Activated B cell treated with CpG ODN at 0.5 μM for 24 hours (primary cell): ENCODE measurements at regions of chr10 and their contacts with region 1.

Region 1: GRCh38 chr10:100046021-100046486 is 35.6 kb downstream of the CPN1 start:
- DNase-seq: peak; percentile 75
- ATAC-seq: peak; percentile 73
- H3K4me3 Mint-ChIP-seq: no peak overlapping the region
- H3K27ac Mint-ChIP-seq: no peak overlapping the region
- H3K4me1 Mint-ChIP-seq: peaks cover 6% of the 10 kb centered on the region
- H3K27me3 Mint-ChIP-seq: no peaks in the 10 kb centered on the region
- CTCF ChIP-seq: peak; percentile 81

Region 2: DNA sequence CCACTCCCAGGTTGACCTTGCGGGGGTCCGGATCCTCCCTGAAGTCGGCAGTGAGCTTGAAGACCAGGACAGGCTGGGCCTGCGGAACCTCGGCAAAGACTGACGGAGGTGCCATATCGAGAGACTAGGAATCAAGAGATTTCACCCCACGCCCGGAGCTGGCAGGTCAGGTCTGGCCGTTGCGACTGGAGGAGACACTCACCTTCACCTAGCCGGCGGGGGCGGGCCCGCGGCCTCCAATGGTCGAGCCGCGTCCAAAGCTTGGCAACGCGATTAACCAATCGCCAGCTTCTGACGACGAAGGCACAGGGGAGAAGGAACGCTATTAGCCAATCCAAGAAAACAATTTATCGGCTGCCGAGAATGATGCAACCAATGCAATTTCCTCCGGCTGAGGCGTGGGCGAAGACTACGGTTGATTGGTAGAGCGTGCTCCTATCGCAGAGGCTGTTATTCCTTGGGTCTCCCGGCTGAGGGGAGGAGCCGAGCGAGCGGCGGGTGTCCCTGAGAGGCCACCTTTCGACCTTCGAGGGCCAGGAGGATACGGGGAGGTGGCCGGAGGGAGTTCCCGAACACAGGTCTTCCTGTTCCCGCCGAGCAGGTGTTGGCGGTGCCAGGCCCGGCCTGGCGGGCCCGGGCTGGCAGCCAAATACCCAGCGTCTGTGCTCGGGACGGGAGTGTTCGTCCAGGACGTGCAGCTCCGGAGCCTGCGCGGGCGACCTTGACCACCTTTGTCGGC is 615.4 kb before region 1 on chr10 and contains the start of gene GOT1:
- CTCF ChIA-PET with region 1: no interaction called
- POLR2A ChIA-PET with region 1: no interaction called
- intact Hi-C with region 1: loop called (anchors 10 kb)
- DNase-seq: peak; percentile 85
- ATAC-seq: peak; percentile 91
- H3K4me3 Mint-ChIP-seq: peak within 1 kb of the TSS; percentile 98
- H3K27ac Mint-ChIP-seq: peak within 1 kb of the TSS; percentile 92
- H3K4me1 Mint-ChIP-seq: peaks cover 29% of the 10 kb centered on the region
- H3K27me3 Mint-ChIP-seq: no peaks in the 10 kb centered on the region
- CTCF ChIP-seq: no peak
- total RNA-seq, gene GOT1: 30.1 and 31.4 TPM in 2 replicates

Region 3: GRCh38 chr10:99845837-99846382 is 200.1 kb before region 1 on chr10:
- CTCF ChIA-PET with region 1: interaction called, 237 read pairs
- POLR2A ChIA-PET with region 1: no interaction called
- intact Hi-C with region 1: loop called (anchors 1 kb)
- DNase-seq: peak; percentile 28
- ATAC-seq: peak; percentile 77
- H3K4me3 Mint-ChIP-seq: peak overlapping the region; percentile 50
- H3K27ac Mint-ChIP-seq: no peak overlapping the region
- H3K4me1 Mint-ChIP-seq: peaks cover 8% of the 10 kb centered on the region
- H3K27me3 Mint-ChIP-seq: no peaks in the 10 kb centered on the region
- CTCF ChIP-seq: no peak

Region 4: DNA sequence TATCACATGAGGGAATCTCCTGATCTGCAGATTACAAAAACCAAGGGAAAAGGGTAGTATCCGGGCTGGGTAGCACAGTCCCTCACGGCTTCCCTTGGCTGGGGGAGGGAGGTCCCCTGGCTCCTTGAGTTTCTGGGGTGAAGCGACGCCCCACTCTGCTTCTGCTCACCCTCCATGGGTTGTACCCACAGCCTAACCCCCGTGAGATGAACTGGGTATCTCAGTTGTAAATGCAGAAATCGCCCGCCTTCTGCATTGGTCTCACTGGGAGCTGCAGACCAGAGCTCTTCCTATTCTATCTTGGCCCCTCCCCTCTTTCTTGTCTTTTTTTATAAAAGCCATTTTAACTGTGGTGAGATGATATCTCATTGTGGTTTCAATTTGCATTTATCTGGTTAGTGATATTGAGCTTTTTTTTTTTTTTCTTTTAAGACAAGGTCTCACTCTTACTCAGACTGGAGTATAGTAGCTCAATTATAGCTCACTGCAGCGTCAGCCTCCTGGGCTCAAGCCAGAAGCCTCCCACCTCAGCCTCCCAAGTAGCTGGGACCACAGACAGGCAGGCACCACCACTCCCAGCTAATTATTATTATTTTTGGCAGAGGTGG is 175.8 kb before region 1 on chr10:
- CTCF ChIA-PET with region 1: interaction called, 10 read pairs
- POLR2A ChIA-PET with region 1: no interaction called
- intact Hi-C with region 1: no loop called
- DNase-seq: no peak
- ATAC-seq: peak; percentile 14
- H3K4me3 Mint-ChIP-seq: no peak overlapping the region
- H3K27ac Mint-ChIP-seq: no peak overlapping the region
- H3K4me1 Mint-ChIP-seq: no peaks in the 10 kb centered on the region
- H3K27me3 Mint-ChIP-seq: peaks cover 35% of the 10 kb centered on the region
- CTCF ChIP-seq: no peak

Region 5: GRCh38 chr10:99976886-99977665 is 69.0 kb before region 1 on chr10:
- CTCF ChIA-PET with region 1: interaction called, 17 read pairs
- POLR2A ChIA-PET with region 1: no interaction called
- intact Hi-C with region 1: loop called (anchors 1 kb)
- DNase-seq: no peak
- ATAC-seq: no peak
- H3K4me3 Mint-ChIP-seq: no peak overlapping the region
- H3K27ac Mint-ChIP-seq: peak overlapping the region; percentile 57
- H3K4me1 Mint-ChIP-seq: peaks cover 77% of the 10 kb centered on the region
- H3K27me3 Mint-ChIP-seq: no peaks in the 10 kb centered on the region
- CTCF ChIP-seq: no peak

Region 6: GRCh38 chr10:100009793-100010676 is 36.0 kb before region 1 on chr10 and contains the start of gene DNMBP:
- CTCF ChIA-PET with region 1: interaction called, 20 read pairs
- POLR2A ChIA-PET with region 1: interaction called, 3 read pairs
- intact Hi-C with region 1: loop called (anchors 1 kb)
- DNase-seq: peak; percentile 88
- ATAC-seq: peak; percentile 88
- H3K4me3 Mint-ChIP-seq: peak within 1 kb of the TSS; percentile 91
- H3K27ac Mint-ChIP-seq: peak within 1 kb of the TSS; percentile 89
- H3K4me1 Mint-ChIP-seq: peaks cover 75% of the 10 kb centered on the region
- H3K27me3 Mint-ChIP-seq: no peaks in the 10 kb centered on the region
- CTCF ChIP-seq: no peak
- total RNA-seq, gene DNMBP: 12.5 and 13.1 TPM in 2 replicates

Region 7: DNA sequence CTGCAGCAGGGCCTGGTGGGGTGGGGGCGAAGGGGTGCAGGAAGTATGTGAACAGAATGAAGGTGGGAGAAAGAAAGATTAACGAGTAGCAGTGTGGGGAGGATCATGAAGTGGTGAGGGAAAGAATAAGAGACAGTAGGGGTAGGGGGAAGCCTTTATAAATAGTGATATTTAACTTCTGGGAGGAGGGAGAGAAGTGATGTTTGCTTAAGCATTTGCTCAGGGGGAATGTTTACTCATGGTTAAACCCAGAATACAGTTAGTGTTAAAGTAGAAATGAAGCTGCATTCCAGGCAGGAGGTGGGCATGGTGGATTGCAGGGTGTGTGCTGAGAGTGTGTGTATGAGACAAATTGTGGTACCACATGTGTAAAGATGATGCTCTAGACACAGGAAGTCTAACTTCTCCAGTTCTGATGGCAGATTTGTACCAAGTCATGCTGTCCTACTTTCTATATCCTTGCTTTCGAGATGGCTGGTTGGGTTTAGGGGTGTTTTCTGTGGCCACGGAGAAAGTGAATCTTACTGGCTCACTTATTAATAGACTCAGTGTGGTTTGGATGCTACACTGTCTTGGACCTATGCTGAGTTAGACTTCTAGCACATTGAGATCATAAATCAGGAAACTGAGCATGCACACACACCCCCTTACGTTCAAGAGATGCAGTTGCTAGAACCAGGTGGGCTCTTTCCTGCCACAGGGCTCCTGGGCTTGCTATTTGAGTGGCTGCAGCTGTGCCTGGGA is 25.7 kb before region 1 on chr10:
- CTCF ChIA-PET with region 1: interaction called, 15 read pairs
- POLR2A ChIA-PET with region 1: interaction called, 3 read pairs
- intact Hi-C with region 1: no loop called
- DNase-seq: no peak
- ATAC-seq: peak; percentile 68
- H3K4me3 Mint-ChIP-seq: no peak overlapping the region
- H3K27ac Mint-ChIP-seq: no peak overlapping the region
- H3K4me1 Mint-ChIP-seq: peaks cover 22% of the 10 kb centered on the region
- H3K27me3 Mint-ChIP-seq: no peaks in the 10 kb centered on the region
- CTCF ChIP-seq: no peak

Region 8: DNA sequence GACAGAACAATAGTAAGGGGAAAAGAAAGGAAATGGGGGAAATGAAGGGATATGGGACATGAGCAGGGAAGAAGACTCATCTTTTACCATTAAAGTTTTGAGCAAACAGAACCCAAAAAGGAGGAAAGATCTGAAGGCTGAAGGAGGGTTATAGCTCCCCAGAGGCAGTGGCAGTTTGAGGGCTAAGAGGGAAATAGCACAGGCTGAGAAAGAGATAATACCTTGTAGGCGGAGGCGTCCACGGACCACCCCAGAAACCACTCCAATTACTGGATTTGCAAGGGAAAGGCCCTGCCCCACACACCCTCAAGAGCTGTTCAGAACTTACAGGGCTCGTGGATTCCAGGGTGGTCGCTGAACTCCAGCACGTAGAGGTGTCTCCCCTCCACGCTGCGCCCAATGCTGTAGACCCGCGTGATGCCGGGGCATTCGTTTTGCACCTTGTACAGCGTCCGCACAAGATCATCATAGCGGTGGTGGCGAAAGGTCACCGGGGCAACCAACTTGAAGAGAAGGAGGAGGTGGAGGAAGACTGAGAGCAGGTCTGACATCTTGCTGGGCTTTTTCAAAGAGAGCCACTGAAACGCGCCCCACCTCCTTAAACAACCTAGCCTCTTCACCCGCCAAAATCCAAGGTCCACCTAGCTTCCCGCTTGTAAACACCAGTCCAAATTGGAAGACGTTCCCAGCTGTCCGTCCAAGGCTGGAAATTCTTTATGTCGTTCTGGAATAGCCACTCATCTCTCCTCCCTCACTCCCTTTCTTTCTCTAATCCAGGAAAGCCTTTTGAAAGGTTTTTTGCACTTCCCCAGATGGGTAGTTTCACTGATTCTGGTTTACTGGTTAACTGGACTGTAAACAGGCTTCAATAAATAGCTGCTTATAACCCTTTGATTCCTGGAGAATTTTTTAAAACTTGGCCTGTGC is 35.3 kb after region 1 on chr10 and contains the start of gene CPN1:
- CTCF ChIA-PET with region 1: no interaction called
- POLR2A ChIA-PET with region 1: no interaction called
- intact Hi-C with region 1: no loop called
- DNase-seq: no peak
- ATAC-seq: no peak
- H3K4me3 Mint-ChIP-seq: no peak within 1 kb of the TSS
- H3K27ac Mint-ChIP-seq: no peak within 1 kb of the TSS
- H3K4me1 Mint-ChIP-seq: no peaks in the 10 kb centered on the region
- H3K27me3 Mint-ChIP-seq: peaks cover 25% of the 10 kb centered on the region
- CTCF ChIP-seq: no peak
- total RNA-seq, gene CPN1: not detected in 2 replicates